MCF 10A (cell line): ENCODE measurements at regions of chr12 and their contacts with region 1.

Region 1: GRCh38 chr12:52171950-52172512 is 19.8 kb downstream of the KRT80 start:
- DNase-seq: peak; percentile 80
- H3K4me3 Mint-ChIP-seq: no peak overlapping the region
- H3K27ac Mint-ChIP-seq: peak overlapping the region; percentile 64
- H3K4me1 Mint-ChIP-seq: peaks cover 45% of the 10 kb centered on the region
- H3K27me3 Mint-ChIP-seq: no peaks in the 10 kb centered on the region
- CTCF ChIP-seq: peak; percentile 39

Region 2: DNA sequence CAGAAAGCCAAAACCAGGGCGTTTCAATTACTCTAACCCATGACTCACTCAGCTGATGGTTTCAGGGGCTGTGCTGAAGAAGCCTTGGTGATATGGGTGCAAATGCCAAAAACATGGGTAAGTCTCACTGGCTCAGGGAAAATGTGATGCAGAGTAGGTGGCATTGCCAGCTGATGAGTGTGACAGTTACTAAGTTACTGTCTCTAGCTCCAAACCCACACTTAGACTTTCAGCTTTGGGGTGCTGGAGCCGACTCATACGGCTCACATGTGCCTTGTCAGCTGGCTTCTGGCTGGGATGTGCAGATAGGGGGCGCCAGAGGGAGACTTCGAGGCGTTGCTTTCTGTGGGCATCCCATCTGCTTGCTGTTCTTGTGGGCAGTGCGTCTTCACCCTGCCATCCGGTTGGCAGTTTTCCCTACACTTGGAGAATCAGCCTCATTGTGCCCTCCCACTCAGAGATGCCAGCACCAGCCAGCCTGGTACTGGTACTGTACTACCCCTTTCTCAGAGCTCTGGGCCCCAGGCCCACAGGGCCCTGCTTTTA is 50.0 kb after region 1 on chr12:
- CTCF ChIA-PET with region 1: no interaction called
- POLR2A ChIA-PET with region 1: interaction called, 10 read pairs
- intact Hi-C with region 1: no loop called
- DNase-seq: peak; percentile 93
- H3K4me3 Mint-ChIP-seq: no peak overlapping the region
- H3K27ac Mint-ChIP-seq: peak overlapping the region; percentile 37
- H3K4me1 Mint-ChIP-seq: peaks cover 40% of the 10 kb centered on the region
- H3K27me3 Mint-ChIP-seq: no peaks in the 10 kb centered on the region
- CTCF ChIP-seq: peak; percentile 45

Region 3: GRCh38 chr12:52243856-52244614 is 72.0 kb after region 1 on chr12:
- CTCF ChIA-PET with region 1: interaction called, 3 read pairs
- POLR2A ChIA-PET with region 1: interaction called, 18 read pairs
- intact Hi-C with region 1: no loop called
- DNase-seq: peak; percentile 98
- H3K4me3 Mint-ChIP-seq: peak overlapping the region; percentile 63
- H3K27ac Mint-ChIP-seq: peak overlapping the region; percentile 99
- H3K4me1 Mint-ChIP-seq: peaks cover 66% of the 10 kb centered on the region
- H3K27me3 Mint-ChIP-seq: no peaks in the 10 kb centered on the region
- CTCF ChIP-seq: no peak